A673 (cell line): ENCODE measurements at regions of chr9 and their contacts with region 1.

Region 1: GRCh38 chr9:2809691-2810433 is 34.0 kb downstream of the PUM3 start:
- DNase-seq: peak; percentile 79
- H3K4me3 ChIP-seq: no peak overlapping the region
- H3K27ac ChIP-seq: no peak overlapping the region
- H3K4me1 ChIP-seq: peaks cover 17% of the 10 kb centered on the region
- H3K27me3 ChIP-seq: no peaks in the 10 kb centered on the region
- CTCF ChIP-seq: no peak

Region 2: GRCh38 chr9:2014696-2015580 is 794.9 kb before region 1 on chr9 and contains the start of gene SMARCA2:
- CTCF ChIA-PET with region 1: no interaction called
- POLR2A ChIA-PET with region 1: no interaction called
- intact Hi-C with region 1: no loop called
- DNase-seq: peak; percentile 99
- H3K4me3 ChIP-seq: peak within 1 kb of the TSS; percentile 85
- H3K27ac ChIP-seq: peak within 1 kb of the TSS; percentile 84
- H3K4me1 ChIP-seq: peaks cover 12% of the 10 kb centered on the region
- H3K27me3 ChIP-seq: no peaks in the 10 kb centered on the region
- CTCF ChIP-seq: no peak
- total RNA-seq, gene SMARCA2: 59.6 and 69.0 TPM in 2 replicates

Region 3: GRCh38 chr9:2461892-2462291 is 348.0 kb before region 1 on chr9:
- CTCF ChIA-PET with region 1: no interaction called
- POLR2A ChIA-PET with region 1: no interaction called
- intact Hi-C with region 1: no loop called
- DNase-seq: peak; percentile 79
- H3K4me3 ChIP-seq: no peak overlapping the region
- H3K27ac ChIP-seq: no peak overlapping the region
- H3K4me1 ChIP-seq: peaks cover 10% of the 10 kb centered on the region
- H3K27me3 ChIP-seq: no peaks in the 10 kb centered on the region
- CTCF ChIP-seq: no peak

Region 4: DNA sequence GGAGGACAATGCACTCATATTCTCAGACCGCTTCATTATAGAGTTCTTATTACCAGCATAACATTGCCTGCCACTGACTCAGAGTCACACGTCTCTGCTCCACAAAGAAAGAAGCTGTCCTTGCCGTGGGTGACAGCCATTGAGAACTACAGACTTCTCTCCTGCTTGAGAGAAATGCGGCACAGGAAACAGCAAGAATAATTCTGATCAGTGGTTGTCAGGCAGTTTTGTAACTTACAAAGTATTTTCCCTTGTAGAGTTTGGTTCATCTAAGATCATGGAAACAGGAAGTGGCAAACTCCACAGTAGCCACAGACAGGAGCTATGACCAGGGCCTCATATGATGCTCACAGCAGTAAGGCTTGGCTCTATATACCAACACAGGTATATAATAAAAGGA is 45.5 kb before region 1 on chr9:
- CTCF ChIA-PET with region 1: no interaction called
- POLR2A ChIA-PET with region 1: no interaction called
- intact Hi-C with region 1: loop called (anchors 5 kb)
- DNase-seq: no peak
- H3K4me3 ChIP-seq: no peak overlapping the region
- H3K27ac ChIP-seq: no peak overlapping the region
- H3K4me1 ChIP-seq: no peaks in the 10 kb centered on the region
- H3K27me3 ChIP-seq: no peaks in the 10 kb centered on the region
- CTCF ChIP-seq: no peak

Region 5: DNA sequence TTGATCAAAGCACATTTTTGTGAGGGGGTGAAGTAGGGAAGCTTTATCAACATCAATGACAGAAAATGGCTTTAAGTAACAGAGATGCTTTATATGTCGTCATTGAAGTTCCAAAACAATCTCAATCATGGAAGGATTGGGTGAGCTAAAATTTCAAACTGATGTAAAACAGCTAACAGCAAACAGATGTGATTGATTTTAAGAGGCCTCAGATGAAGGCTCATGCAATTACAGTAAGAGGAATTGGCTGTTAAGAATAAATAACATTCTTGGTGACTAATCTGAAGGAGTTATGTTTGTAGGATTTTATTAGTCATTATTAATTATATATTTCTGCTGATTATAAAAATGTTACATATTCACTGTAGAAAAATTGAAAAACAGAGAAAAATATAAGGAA is 97.5 kb after region 1 on chr9:
- CTCF ChIA-PET with region 1: no interaction called
- POLR2A ChIA-PET with region 1: no interaction called
- intact Hi-C with region 1: no loop called
- DNase-seq: no peak
- H3K4me3 ChIP-seq: no peak overlapping the region
- H3K27ac ChIP-seq: no peak overlapping the region
- H3K4me1 ChIP-seq: no peaks in the 10 kb centered on the region
- H3K27me3 ChIP-seq: peaks cover 10% of the 10 kb centered on the region
- CTCF ChIP-seq: no peak